WTC11 (cell line): ENCODE measurements at regions of chr2 and their contacts with region 1.

Region 1: GRCh38 chr2:64523666-64524603 is at the start of gene AFTPH:
- DNase-seq: peak; percentile 98
- ATAC-seq: peak; percentile 95
- H3K4me3 Mint-ChIP-seq: peak within 1 kb of the TSS; percentile 100
- H3K27ac Mint-ChIP-seq: peak within 1 kb of the TSS; percentile 98
- H3K4me1 Mint-ChIP-seq: peaks cover 18% of the 10 kb centered on the region
- H3K27me3 Mint-ChIP-seq: no peaks in the 10 kb centered on the region
- CTCF ChIP-seq: no peak
- total RNA-seq, gene AFTPH: 14.9 to 16.3 TPM (median 15.0 TPM) in 3 replicates

Region 2: GRCh38 chr2:64234785-64235184 is 289.1 kb before region 1 on chr2:
- CTCF ChIA-PET with region 1: no interaction called
- POLR2A ChIA-PET with region 1: no interaction called
- DNase-seq: no peak
- ATAC-seq: no peak
- H3K4me3 Mint-ChIP-seq: no peak overlapping the region
- H3K27ac Mint-ChIP-seq: no peak overlapping the region
- H3K4me1 Mint-ChIP-seq: peaks cover 28% of the 10 kb centered on the region
- H3K27me3 Mint-ChIP-seq: no peaks in the 10 kb centered on the region
- CTCF ChIP-seq: no peak

Region 3: DNA sequence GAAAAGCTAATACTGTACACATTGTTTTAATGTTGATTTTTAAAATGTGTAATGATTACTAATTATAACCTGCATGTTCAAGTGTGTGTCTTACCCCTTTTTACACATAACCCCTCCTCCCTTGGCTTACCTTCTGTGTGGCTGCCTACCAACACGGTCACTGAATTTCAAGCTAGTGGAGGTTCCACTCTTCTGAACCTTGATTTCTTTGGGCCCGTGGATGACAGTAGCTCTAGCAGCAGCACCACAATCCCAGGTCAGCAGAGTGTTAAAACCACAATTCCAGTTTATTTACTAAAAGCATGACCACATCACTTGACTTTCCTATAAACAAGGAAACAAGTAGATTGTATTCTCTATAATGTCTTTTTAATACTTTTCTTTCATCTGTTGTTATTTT is 57.1 kb after region 1 on chr2:
- CTCF ChIA-PET with region 1: no interaction called
- POLR2A ChIA-PET with region 1: no interaction called
- DNase-seq: no peak
- ATAC-seq: no peak
- H3K4me3 Mint-ChIP-seq: no peak overlapping the region
- H3K27ac Mint-ChIP-seq: no peak overlapping the region
- H3K4me1 Mint-ChIP-seq: no peaks in the 10 kb centered on the region
- H3K27me3 Mint-ChIP-seq: no peaks in the 10 kb centered on the region
- CTCF ChIP-seq: no peak

Region 4: DNA sequence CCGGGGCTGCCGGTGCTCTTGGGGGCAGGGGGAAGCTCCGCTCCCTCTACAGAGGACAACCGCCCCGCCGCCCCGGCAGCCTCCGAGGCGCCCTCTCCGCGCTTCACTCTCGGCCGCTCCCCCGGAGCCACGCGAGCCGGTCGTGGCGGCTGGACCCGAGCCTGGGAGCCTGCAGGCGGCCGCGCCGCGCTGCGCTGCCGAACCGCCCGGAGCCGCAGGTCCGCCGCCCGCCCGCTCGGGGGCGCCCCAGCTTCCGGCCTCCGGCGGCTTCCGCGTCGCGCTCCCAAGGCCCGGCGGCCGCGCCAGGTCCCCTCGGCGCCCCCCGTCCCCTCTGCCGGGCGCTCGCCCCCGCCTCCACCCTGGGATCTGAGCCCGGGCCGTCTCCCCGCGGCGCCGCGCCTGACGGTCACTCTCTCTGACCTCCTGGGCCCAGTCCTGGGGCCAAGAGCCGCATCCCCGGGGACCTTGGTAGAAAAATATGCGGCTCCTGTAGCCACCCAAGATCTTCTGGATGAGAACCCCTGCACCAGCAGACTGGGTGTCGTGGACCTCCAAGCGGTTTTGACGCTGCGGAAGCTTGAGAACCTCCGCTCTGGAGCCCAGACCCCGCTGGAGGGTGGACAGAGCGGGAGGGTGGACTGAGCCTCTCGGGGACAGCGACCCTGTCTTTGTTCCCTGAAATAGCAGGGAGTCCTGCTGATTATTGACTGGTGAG is 85.4 kb after region 1 on chr2:
- CTCF ChIA-PET with region 1: interaction called, 13 read pairs
- POLR2A ChIA-PET with region 1: no interaction called
- DNase-seq: peak; percentile 70
- ATAC-seq: peak; percentile 81
- H3K4me3 Mint-ChIP-seq: peak overlapping the region; percentile 74
- H3K27ac Mint-ChIP-seq: no peak overlapping the region
- H3K4me1 Mint-ChIP-seq: peaks cover 7% of the 10 kb centered on the region
- H3K27me3 Mint-ChIP-seq: peaks cover 32% of the 10 kb centered on the region
- CTCF ChIP-seq: no peak; the same call in 1 of the 2 replicates

Region 5: GRCh38 chr2:64757126-64757525 is 233.2 kb after region 1 on chr2:
- CTCF ChIA-PET with region 1: no interaction called
- POLR2A ChIA-PET with region 1: no interaction called
- DNase-seq: no peak
- ATAC-seq: no peak
- H3K4me3 Mint-ChIP-seq: no peak overlapping the region
- H3K27ac Mint-ChIP-seq: no peak overlapping the region
- H3K4me1 Mint-ChIP-seq: peaks cover 9% of the 10 kb centered on the region
- H3K27me3 Mint-ChIP-seq: peaks cover 7% of the 10 kb centered on the region
- CTCF ChIP-seq: no peak

Region 6: DNA sequence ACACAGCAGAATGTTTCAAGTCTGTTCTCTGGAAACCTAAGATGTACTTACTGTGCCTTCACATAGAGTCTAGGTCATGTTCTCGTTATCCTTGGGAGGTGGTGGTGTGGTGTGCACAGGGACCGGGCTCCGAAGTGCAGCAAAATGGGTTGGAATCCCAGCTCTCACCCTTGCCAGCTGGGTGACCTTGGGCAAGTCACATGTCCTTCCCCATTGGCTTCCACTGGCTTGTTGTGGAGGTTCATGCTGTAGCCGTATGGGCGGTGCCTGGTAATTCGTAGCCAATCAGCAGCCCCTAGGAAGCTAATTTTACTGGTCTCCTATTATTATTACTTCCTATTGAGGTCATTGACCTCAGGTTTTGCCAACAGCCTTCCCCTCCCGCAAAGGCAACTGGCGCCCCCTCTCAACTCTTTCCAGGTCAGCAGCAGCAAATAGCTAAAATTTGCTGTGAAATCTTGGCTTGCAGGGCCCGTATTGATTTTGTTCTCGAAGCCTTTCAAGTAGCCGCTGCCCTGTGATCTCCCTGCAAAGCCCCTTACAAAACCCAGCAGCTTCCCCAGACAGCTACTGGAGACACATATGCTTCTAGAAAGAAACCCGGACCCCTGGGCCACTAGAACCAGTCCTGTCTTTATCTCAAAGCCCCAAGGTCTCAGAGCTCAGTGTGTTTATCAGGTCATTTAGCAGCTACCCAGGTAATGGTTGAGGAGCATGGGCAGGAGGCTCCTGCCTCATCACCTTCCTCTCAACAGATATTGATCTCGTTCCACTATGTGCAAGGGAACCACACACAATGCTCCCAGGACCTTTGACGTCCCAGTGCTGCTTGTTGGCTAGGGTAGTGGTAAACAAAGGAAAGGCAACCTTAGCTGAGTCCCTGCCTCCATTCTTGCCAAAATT is 398.8 kb after region 1 on chr2:
- CTCF ChIA-PET with region 1: no interaction called
- POLR2A ChIA-PET with region 1: no interaction called
- DNase-seq: peak; percentile 54
- ATAC-seq: peak; percentile 50
- H3K4me3 Mint-ChIP-seq: no peak overlapping the region
- H3K27ac Mint-ChIP-seq: no peak overlapping the region
- H3K4me1 Mint-ChIP-seq: peaks cover 25% of the 10 kb centered on the region
- H3K27me3 Mint-ChIP-seq: peaks cover 58% of the 10 kb centered on the region
- CTCF ChIP-seq: no peak; the same call in 1 of the 2 replicates